HCT116 (cell line): ENCODE measurements at regions of chr1 and their contacts with region 1.

Region 1: GRCh38 chr1:56584910-56585528 is 5.7 kb upstream of the PLPP3 start:
- DNase-seq: peak; percentile 39
- ATAC-seq: peak; percentile 76
- H3K4me3 ChIP-seq: no peak overlapping the region
- H3K27ac ChIP-seq: no peak overlapping the region
- H3K4me1 ChIP-seq: peaks cover 0 to 5% of the 10 kb centered on the region in 2 experiments; a peak in 2 of 4 replicates
- H3K27me3 ChIP-seq: no peaks in the 10 kb centered on the region
- CTCF ChIP-seq: peak; percentile 68 to 90 (median 70); a peak in 5 of 6 replicates
- POLR2A ChIP-seq: no peak
- RAD21 ChIP-seq: peak; percentile 90

Region 2: GRCh38 chr1:55478742-55479141 is 1106.3 kb before region 1 on chr1:
- CTCF ChIA-PET with region 1: interaction called, 12 read pairs
- POLR2A ChIA-PET with region 1: no interaction called
- RAD21 ChIA-PET with region 1: no interaction called
- intact Hi-C with region 1: loop called (anchors 2 kb)
- DNase-seq: peak; percentile 15
- ATAC-seq: peak; percentile 62
- H3K4me3 ChIP-seq: no peak overlapping the region
- H3K27ac ChIP-seq: no peak overlapping the region
- H3K4me1 ChIP-seq: peaks cover 0 to 12% of the 10 kb centered on the region in 2 experiments; a peak in 1 of 4 replicates
- H3K27me3 ChIP-seq: no peaks in the 10 kb centered on the region
- CTCF ChIP-seq: peak in 2 of 3 experiments; percentile 53 to 54; a peak in 3 of 6 replicates
- POLR2A ChIP-seq: no peak
- RAD21 ChIP-seq: peak; percentile 66

Region 3: DNA sequence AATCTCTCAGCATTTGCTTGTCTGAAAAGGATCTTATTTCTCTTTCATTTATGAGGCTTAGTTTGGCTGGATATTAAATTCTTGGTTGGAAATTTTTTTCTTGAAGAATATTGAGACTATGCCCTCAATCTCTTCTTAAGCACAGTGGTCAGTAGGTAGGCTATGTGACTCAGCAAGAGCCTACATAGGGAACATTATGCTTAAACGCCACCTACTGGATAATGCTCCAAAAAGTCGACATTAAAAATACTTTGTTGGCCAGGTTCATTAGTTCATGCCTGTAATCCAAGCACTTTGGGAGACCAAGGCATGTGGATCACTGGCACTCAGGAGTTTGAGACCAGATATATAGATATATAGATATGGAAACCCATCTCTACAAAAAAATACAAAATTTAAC is 691.9 kb before region 1 on chr1:
- CTCF ChIA-PET with region 1: no interaction called
- POLR2A ChIA-PET with region 1: no interaction called
- RAD21 ChIA-PET with region 1: no interaction called
- intact Hi-C with region 1: loop called (anchors 2 kb)
- DNase-seq: peak; percentile 53
- ATAC-seq: peak; percentile 95
- H3K4me3 ChIP-seq: no peak overlapping the region
- H3K27ac ChIP-seq: no peak overlapping the region
- H3K4me1 ChIP-seq: no peaks in the 10 kb centered on the region
- H3K27me3 ChIP-seq: no peaks in the 10 kb centered on the region
- CTCF ChIP-seq: peak; percentile 47 to 59 (median 55); a peak in 5 of 6 replicates
- POLR2A ChIP-seq: no peak
- RAD21 ChIP-seq: peak; percentile 74

Region 4: GRCh38 chr1:56709269-56709880 is 124.4 kb after region 1 on chr1:
- CTCF ChIA-PET with region 1: interaction called, 10 read pairs
- POLR2A ChIA-PET with region 1: no interaction called
- RAD21 ChIA-PET with region 1: no interaction called
- intact Hi-C with region 1: loop called (anchors 5 kb)
- DNase-seq: peak; percentile 45
- ATAC-seq: peak; percentile 88
- H3K4me3 ChIP-seq: no peak overlapping the region
- H3K27ac ChIP-seq: no peak overlapping the region
- H3K4me1 ChIP-seq: peaks cover 0 to 5% of the 10 kb centered on the region in 2 experiments; a peak in 2 of 4 replicates
- H3K27me3 ChIP-seq: peaks cover 33% of the 10 kb centered on the region
- CTCF ChIP-seq: peak; percentile 26 to 59 (median 43); a peak in 4 of 6 replicates
- POLR2A ChIP-seq: no peak
- RAD21 ChIP-seq: peak; percentile 68